Activated CD4-positive, alpha-beta T cell treated with anti-CD3 and anti-CD28 coated beads for 36 hours (primary cell): ENCODE measurements at regions of chr2 and their contacts with region 1.

Region 1: DNA sequence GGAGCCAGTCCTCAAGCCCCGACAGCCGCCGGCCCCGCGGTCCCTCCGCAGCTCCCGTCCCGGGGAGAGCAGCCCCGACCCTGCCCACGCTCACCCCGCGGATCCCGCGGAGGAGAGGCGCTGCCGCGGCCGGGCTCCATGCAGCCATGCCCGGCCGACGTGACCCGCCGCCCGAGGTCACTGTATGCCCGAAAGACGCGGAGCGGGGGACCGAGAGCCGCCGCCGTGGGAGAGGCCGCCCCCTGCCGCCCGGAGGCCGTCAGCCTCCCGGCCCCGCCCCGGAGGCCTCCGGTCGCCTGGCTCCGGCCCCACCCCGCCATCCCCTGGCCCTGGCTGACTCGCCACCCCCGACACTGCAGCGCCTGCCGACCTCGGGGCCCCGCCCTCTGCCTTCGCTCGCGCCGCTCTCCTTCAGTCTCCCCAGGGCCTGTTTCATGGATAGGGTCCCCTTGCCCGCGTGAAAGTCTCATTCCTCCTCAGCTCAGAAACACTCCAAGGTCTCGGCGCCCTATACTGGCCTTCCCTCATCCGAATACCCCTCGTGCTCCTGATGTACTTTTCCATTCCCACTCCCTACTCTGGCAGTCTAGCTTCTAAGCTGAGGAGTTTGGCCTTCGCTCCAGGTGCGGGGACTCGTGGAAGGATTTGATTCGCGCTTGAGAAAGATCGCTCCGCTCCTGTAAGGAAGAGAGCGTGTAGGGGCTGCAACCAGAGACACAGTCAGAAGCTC is at the start of gene BOLA3:
- DNase-seq: peak; percentile 94
- ATAC-seq: peak; percentile 94
- H3K4me3 Mint-ChIP-seq: no peak within 1 kb of the TSS
- H3K27ac Mint-ChIP-seq: no peak within 1 kb of the TSS
- H3K4me1 Mint-ChIP-seq: peaks cover 5% of the 10 kb centered on the region
- H3K27me3 Mint-ChIP-seq: no peaks in the 10 kb centered on the region
- total RNA-seq, gene BOLA3: 119 to 130 TPM

Region 2: DNA sequence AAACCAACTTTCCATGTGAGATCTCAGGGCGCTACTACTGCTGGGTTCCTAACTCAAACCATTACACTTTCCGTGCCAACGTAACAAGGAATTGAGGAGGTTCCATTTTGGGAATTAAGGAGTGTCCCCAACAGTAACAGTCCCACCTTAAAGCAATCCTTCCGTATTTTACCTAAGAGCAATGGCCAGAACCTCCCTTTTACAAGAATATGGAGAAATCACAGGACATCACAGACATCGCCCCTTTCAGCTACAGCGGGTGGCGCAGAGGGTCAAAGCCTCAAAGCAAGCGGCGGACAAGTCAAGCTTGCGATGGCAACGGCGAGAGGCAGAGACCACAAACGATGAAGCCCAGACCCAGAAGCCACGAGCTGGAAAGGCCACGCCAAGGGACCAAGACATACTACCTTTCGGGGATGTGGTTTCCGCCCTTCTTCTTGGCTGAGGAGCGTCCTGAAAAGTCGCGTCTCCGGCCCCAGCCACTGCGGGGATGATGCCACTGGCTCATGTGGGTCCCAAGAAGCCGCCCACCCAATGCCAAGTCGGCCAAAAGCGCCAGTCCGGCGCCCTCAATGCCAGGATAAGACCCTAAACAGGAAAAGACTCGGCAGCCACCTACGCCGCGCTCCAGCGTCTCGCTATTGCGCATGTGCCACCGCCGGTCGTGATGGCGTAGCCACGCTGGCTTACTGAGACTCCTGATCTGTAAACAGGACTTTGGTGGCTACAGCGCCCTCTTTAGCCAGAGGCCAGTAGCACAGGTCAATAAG is 368.2 kb before region 1 on chr2 and contains the start of gene DUSP11:
- CTCF ChIA-PET with region 1: interaction called, 7 read pairs
- POLR2A ChIA-PET with region 1: no interaction called
- intact Hi-C with region 1: loop called in 1 of 2 experiments (anchors 1 kb)
- DNase-seq: peak; percentile 98
- ATAC-seq: peak; percentile 100
- H3K4me3 Mint-ChIP-seq: peak within 1 kb of the TSS; percentile 100
- H3K27ac Mint-ChIP-seq: peak within 1 kb of the TSS; percentile 98
- H3K4me1 Mint-ChIP-seq: peaks cover 27% of the 10 kb centered on the region
- H3K27me3 Mint-ChIP-seq: peaks cover 2% of the 10 kb centered on the region
- total RNA-seq, gene DUSP11: 27.6 to 33.5 TPM

Region 3: GRCh38 chr2:74119912-74120825 is 27.7 kb before region 1 on chr2:
- CTCF ChIA-PET with region 1: interaction called, 26 read pairs
- POLR2A ChIA-PET with region 1: interaction called, 3 read pairs
- intact Hi-C with region 1: loop called in 1 of 2 experiments (anchors 1 kb)
- DNase-seq: peak; percentile 92
- ATAC-seq: peak; percentile 97
- H3K4me3 Mint-ChIP-seq: peak overlapping the region; percentile 81
- H3K27ac Mint-ChIP-seq: peak overlapping the region; percentile 89
- H3K4me1 Mint-ChIP-seq: peaks cover 7% of the 10 kb centered on the region
- H3K27me3 Mint-ChIP-seq: peaks cover 3% of the 10 kb centered on the region

Region 4: GRCh38 chr2:74198461-74199274 is 50.8 kb after region 1 on chr2 and contains the start of gene MTHFD2:
- CTCF ChIA-PET with region 1: interaction called, 18 read pairs
- POLR2A ChIA-PET with region 1: interaction called, 6 read pairs
- intact Hi-C with region 1: loop called (anchors 1 to 2 kb)
- DNase-seq: peak; percentile 96
- ATAC-seq: peak; percentile 90
- H3K4me3 Mint-ChIP-seq: peak within 1 kb of the TSS; percentile 100
- H3K27ac Mint-ChIP-seq: peak within 1 kb of the TSS; percentile 100
- H3K4me1 Mint-ChIP-seq: peaks cover 40% of the 10 kb centered on the region
- H3K27me3 Mint-ChIP-seq: no peaks in the 10 kb centered on the region
- total RNA-seq, gene MTHFD2: 411 to 453 TPM